IMR-90 (cell line): ENCODE measurements at regions of chr11 and their contacts with region 1.

Region 1: DNA sequence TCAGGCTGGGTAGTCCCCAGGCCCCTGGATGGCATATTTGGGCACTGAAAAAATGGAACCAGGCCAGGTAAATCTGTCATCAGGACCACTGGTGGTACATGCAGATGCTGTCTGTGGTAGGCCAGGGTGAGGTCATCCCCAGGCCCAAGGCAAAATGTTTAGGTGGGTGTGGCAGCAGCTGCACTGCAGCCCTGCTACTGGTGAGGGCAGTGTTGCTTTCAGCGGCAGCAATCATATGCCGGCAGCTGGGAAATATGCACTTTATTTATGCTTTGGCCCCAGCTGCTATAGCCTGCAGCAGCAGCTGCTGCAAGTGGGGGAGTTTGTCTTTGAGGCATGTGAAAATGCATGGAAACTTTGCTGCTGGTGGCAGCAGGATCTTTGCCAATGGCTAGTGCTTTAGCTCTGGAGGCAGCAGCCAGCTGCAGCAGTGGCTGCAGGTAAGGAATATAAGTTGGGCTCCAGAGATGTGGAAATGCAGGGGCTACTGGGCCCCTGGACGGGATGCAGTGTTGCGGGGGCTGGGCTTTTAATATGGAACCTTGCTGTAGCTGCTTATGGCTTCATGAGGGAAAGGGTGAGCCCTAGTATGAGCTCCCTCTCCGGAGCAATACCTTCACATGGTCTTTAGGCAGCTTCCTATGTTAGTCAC is 365.7 kb upstream of the CADM1 start:
- DNase-seq: peak; percentile 51
- ATAC-seq: peak; percentile 94
- H3K4me3 ChIP-seq: no peak overlapping the region
- H3K27ac ChIP-seq: no peak overlapping the region
- H3K4me1 ChIP-seq: no peaks in the 10 kb centered on the region; the same call in 1 of the 2 replicates
- H3K27me3 ChIP-seq: no peaks in the 10 kb centered on the region; the same call in 1 of the 2 replicates
- CTCF ChIP-seq: peak; percentile 61
- POLR2A ChIP-seq: no peak
- RAD21 ChIP-seq: peak; percentile 73

Region 2: GRCh38 chr11:116224154-116224888 is 354.4 kb after region 1 on chr11:
- CTCF ChIA-PET with region 1: no interaction called
- POLR2A ChIA-PET with region 1: no interaction called
- dilution Hi-C with region 1: no loop called
- in situ Hi-C with region 1: no loop called
- intact Hi-C with region 1: loop called (anchors 5 kb)
- DNase-seq: peak; percentile 22
- ATAC-seq: peak; percentile 87
- H3K4me3 ChIP-seq: no peak overlapping the region
- H3K27ac ChIP-seq: no peak overlapping the region
- H3K4me1 ChIP-seq: no peaks in the 10 kb centered on the region
- H3K27me3 ChIP-seq: no peaks in the 10 kb centered on the region
- CTCF ChIP-seq: peak; percentile 60
- POLR2A ChIP-seq: no peak
- RAD21 ChIP-seq: peak; percentile 53

Region 3: DNA sequence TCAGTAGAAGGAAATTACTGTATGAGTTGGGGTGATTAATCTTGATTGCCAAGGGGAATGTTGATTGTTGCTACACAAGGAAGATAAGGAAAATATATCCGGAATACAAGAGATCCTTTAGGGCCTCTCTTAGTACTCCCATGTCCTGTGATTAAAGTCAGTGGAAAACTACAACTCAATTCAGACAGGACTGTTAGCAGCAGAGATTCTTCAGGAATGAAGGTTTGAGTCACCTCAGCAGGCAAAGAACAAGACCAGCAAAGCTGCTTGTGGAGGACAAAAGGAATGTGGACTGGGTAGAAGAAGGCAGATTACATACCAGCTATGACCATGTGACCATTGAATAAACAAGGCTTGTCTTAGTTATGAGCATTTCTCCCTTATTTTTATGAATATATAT is 424.7 kb after region 1 on chr11:
- CTCF ChIA-PET with region 1: no interaction called
- POLR2A ChIA-PET with region 1: no interaction called
- dilution Hi-C with region 1: no loop called
- in situ Hi-C with region 1: no loop called
- intact Hi-C with region 1: no loop called
- DNase-seq: peak; percentile 32
- ATAC-seq: peak; percentile 40; the same call in 1 of the 2 replicates
- H3K4me3 ChIP-seq: no peak overlapping the region
- H3K27ac ChIP-seq: no peak overlapping the region
- H3K4me1 ChIP-seq: no peaks in the 10 kb centered on the region
- H3K27me3 ChIP-seq: no peaks in the 10 kb centered on the region
- CTCF ChIP-seq: no peak
- POLR2A ChIP-seq: no peak
- RAD21 ChIP-seq: no peak